Mammary epithelial cell (primary cell): ENCODE measurements at regions of chr3 and their contacts with region 1.

Region 1: DNA sequence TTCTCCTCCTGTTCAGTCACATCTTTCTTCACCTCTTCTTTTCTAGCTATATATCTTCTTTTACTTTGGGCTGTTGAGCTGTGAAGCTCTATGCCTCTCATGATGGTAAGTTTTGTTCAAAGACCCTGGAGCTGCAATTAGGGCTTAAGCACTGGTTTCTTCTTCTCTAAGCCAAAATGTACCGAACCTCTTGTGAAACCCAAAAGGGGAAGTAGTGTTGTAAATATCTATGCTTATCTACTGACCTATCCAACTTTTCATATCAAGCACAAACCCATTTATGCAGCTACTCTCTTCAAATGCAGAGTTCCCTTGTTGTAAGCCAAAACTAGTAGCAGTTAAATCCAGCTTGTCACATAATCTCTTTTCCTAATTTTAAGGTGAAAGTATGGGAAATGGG is 123.6 kb upstream of the CD96 start:
- DNase-seq: no peak
- H3K4me3 ChIP-seq: no peak overlapping the region
- H3K27ac ChIP-seq: no peak overlapping the region
- H3K4me1 ChIP-seq: no peaks in the 10 kb centered on the region
- H3K27me3 ChIP-seq: no peaks in the 10 kb centered on the region
- CTCF ChIP-seq: no peak

Region 2: DNA sequence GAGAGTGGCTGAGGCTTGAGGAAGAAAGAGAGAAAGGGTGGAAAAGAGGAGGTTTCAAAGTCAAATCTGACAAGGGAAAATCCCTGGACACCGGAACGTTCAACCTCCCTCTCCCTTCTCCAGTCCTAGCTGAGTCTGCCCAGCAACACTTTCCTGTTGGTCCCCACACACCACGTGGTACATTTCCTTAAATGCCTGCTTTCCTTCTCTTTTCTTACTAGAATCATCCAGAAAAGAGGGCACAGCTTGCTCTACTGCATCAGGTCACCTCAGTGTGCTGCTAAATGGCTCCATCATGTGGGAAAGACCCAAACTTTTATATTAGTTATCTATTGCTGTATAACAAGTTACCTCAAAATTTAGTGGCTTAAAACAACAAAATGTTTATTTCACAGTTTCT is 165.6 kb before region 1 on chr3:
- CTCF ChIA-PET with region 1: no interaction called
- dilution Hi-C with region 1: no loop called
- in situ Hi-C with region 1: no loop called
- intact Hi-C with region 1: no loop called
- DNase-seq: no peak
- H3K4me3 ChIP-seq: no peak overlapping the region
- H3K27ac ChIP-seq: no peak overlapping the region
- H3K4me1 ChIP-seq: peaks cover 10% of the 10 kb centered on the region
- H3K27me3 ChIP-seq: no peaks in the 10 kb centered on the region
- CTCF ChIP-seq: no peak

Region 3: GRCh38 chr3:111454538-111454937 is 36.1 kb after region 1 on chr3:
- CTCF ChIA-PET with region 1: no interaction called
- dilution Hi-C with region 1: loop called (anchors 5 kb)
- in situ Hi-C with region 1: no loop called
- intact Hi-C with region 1: no loop called
- DNase-seq: no peak
- H3K4me3 ChIP-seq: no peak overlapping the region
- H3K27ac ChIP-seq: no peak overlapping the region
- H3K4me1 ChIP-seq: no peaks in the 10 kb centered on the region
- H3K27me3 ChIP-seq: peaks cover 3% of the 10 kb centered on the region
- CTCF ChIP-seq: no peak